ENCODE measurements at regions of chr4 and their contacts with region 1.

Region 1: GRCh38 chr4:124275-125081 is at the start of gene ZNF718:
- DNase-seq: peak; percentile 97
- ATAC-seq: peak; percentile 98
- H3K4me3 Mint-ChIP-seq: peak within 1 kb of the TSS; percentile 99
- H3K27ac Mint-ChIP-seq: peak within 1 kb of the TSS; percentile 100
- H3K4me1 Mint-ChIP-seq: peaks cover 7% of the 10 kb centered on the region
- H3K27me3 Mint-ChIP-seq: peaks cover 14% of the 10 kb centered on the region
- CTCF ChIP-seq: no peak
- total RNA-seq, gene ZNF718: 11.8 to 12.5 TPM (median 12.0 TPM) in 3 replicates

Region 2: DNA sequence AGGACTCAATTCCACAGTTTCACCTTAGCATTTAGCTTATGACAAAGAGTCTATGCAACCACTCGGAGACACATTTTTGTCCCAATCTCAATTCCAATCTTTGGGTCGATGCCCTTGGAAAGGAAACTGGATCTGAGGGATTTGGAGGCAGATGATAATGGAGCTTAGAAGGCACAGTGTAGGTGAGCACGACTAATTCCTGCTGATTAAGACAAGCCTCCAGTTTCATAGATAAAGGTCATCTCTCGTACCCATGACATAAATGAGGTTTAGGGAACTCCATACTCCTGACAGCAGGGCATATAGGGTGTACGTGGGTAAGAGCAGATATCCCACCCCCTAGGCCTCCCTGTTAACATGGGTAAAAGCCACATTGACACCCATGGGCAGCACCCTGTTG is 24.6 kb before region 1 on chr4:
- CTCF ChIA-PET with region 1: no interaction called
- POLR2A ChIA-PET with region 1: no interaction called
- DNase-seq: no peak
- ATAC-seq: no peak
- H3K4me3 Mint-ChIP-seq: no peak overlapping the region
- H3K27ac Mint-ChIP-seq: no peak overlapping the region
- H3K4me1 Mint-ChIP-seq: peaks cover 6% of the 10 kb centered on the region; the same call in 1 of the 2 replicates
- H3K27me3 Mint-ChIP-seq: peaks cover 48% of the 10 kb centered on the region
- CTCF ChIP-seq: no peak

Region 3: DNA sequence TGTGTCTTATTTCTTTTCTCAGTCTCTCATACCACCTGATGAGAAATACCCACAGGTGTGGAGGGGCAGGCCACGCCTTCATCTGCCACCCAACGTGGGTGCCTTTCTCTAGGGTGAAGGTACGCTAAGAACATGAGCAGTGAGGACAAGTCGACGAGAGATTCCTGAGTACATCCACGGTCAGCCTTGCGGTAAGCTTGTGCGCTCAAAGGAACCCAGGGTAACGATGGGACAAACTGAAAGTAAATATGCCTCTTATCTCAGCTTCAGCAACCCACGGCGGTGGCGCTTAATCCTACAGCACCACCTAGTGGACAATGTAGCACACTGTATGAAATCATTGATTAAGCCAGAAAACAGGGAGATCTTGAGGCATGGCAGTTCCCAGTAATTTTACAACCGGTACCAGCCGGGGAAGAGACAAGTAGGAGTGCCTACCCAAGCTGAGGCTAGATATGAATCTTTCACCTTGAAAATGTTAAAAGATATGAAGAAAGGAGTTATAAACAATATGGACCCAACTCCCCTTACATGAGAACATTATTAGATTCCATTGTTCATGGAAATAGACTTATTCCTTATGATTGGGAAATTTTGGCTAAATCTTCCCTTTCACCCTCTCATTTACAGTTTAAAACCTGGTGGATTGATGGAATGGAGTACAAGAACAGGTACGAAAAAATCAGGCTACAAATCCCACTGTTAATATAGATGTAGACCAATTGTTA is 117.8 kb after region 1 on chr4:
- CTCF ChIA-PET with region 1: interaction called, 20 read pairs
- POLR2A ChIA-PET with region 1: interaction called, 5 read pairs
- DNase-seq: peak; percentile 60
- ATAC-seq: peak; percentile 85
- H3K4me3 Mint-ChIP-seq: peak overlapping the region; percentile 49
- H3K27ac Mint-ChIP-seq: peak overlapping the region; percentile 84
- H3K4me1 Mint-ChIP-seq: peaks cover 38% of the 10 kb centered on the region
- H3K27me3 Mint-ChIP-seq: no peaks in the 10 kb centered on the region
- CTCF ChIP-seq: peak; percentile 85

Measured in WTC11 (cell line).